HEK293 (cell line): ENCODE measurements at regions of chr17 and their contacts with region 1.

Region 1: DNA sequence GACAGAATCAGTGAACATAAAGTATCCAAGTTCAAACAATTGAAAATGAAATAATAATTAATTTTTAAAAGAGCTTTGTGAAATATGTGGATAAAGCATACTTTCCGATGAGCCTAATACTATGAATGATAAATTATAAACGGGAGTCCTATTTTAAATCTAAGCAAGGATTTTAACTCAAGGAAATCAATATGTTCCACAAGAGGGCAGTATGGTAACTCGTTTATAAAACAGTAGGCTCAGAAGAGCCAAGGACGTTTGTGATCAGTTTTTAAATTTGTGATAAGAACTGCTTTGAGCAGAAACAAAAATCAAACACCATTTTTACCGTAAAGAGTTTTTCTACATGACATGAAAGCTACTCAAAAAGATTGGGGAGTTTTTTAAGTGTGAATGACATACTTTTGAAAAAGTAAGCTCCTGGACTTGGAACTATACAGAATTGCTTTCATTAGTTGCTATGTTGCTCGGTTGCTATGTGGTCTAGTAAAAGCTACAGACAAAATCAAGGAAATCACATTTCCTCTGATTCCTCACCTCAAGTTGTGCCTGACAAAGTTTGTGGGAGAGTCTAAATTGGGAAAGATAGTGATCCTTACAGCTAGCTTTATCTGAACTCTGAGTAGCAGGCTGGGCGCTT is 11.8 kb upstream of the TEKT1 start:
- H3K4me3 ChIP-seq: no peak overlapping the region
- H3K27ac ChIP-seq: no peak overlapping the region
- H3K4me1 ChIP-seq: no peaks in the 10 kb centered on the region
- CTCF ChIP-seq: no peak

Region 2: GRCh38 chr17:6749519-6749918 is 93.8 kb before region 1 on chr17:
- CTCF ChIA-PET with region 1: interaction called, 13 read pairs
- POLR2A ChIA-PET with region 1: no interaction called
- H3K4me3 ChIP-seq: no peak overlapping the region
- H3K27ac ChIP-seq: no peak overlapping the region
- H3K4me1 ChIP-seq: no peaks in the 10 kb centered on the region; the same call in 1 of the 2 replicates
- CTCF ChIP-seq: no peak; the same call in 1 of the 2 replicates

Region 3: DNA sequence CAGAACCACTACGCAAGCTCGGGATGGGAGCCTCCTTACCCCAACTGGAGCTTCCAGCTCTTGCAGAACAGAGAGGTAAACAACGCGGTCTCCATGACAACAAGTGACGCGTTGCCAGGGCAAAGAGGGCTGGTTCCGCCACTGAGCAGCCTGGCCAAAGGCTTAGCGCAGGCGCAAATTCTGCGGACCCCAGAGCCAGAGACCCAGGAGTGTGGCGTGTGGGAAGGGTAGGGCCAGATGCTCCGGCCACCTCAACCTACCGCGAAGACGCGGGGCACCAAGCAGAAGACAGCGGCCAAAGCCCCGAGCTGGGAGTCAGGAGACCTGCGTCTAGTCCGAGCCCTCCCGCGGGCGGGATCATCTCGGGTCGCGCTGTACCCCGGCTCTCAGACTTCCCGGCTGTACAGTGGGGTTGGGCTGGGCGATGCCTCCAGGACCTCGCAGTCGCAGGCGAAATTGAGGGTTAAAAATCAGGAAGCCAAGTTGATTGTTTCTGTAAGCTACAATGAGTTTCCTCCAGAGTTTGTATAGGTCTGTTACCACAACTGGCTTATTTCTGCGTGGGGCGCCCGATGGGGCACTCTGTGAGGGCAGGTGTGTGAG is 11.6 kb before region 1 on chr17 and contains the start of gene TEKT1:
- CTCF ChIA-PET with region 1: interaction called, 49 read pairs
- POLR2A ChIA-PET with region 1: no interaction called
- H3K4me3 ChIP-seq: peak within 1 kb of the TSS; percentile 65
- H3K27ac ChIP-seq: no peak within 1 kb of the TSS
- H3K4me1 ChIP-seq: no peaks in the 10 kb centered on the region
- CTCF ChIP-seq: no peak

Region 4: DNA sequence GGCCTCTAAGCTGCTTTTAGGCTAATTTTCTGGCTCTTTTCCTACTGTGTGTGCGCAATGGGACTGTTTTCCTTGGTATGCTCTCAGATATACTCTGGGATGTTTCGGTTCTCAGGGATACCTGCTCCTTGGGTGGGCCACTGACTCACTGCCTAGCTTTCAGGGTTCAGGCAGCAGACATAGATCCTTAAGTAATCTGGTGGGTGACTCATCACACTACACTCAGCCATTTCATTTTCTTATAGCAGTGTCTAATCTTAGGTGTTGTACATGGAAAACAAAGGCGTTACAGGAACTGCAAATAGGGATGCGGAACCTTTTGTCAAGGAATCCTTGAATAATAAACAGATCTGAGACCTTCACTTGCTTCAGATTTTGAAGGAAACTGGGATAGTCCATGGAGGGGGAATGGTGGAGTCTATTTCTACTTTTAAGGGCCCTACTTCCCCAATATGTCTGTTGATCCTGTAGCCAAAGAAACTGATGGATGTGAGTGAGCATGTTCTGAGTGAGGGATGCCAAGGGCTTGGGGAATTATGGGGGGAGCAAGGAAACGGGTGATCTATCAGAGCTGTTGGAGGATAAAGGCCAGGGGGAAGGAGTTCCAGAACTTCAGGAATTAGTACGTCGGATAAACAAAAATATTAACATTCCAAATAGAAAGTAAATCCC is 28.9 kb after region 1 on chr17:
- CTCF ChIA-PET with region 1: interaction called, 18 read pairs
- POLR2A ChIA-PET with region 1: no interaction called
- H3K4me3 ChIP-seq: no peak overlapping the region
- H3K27ac ChIP-seq: no peak overlapping the region
- H3K4me1 ChIP-seq: no peaks in the 10 kb centered on the region
- CTCF ChIP-seq: no peak

Region 5: GRCh38 chr17:6913608-6914443 is 70.5 kb after region 1 on chr17:
- CTCF ChIA-PET with region 1: interaction called, 11 read pairs
- POLR2A ChIA-PET with region 1: no interaction called
- H3K4me3 ChIP-seq: no peak overlapping the region
- H3K27ac ChIP-seq: no peak overlapping the region
- H3K4me1 ChIP-seq: no peaks in the 10 kb centered on the region
- CTCF ChIP-seq: no peak

Region 6: DNA sequence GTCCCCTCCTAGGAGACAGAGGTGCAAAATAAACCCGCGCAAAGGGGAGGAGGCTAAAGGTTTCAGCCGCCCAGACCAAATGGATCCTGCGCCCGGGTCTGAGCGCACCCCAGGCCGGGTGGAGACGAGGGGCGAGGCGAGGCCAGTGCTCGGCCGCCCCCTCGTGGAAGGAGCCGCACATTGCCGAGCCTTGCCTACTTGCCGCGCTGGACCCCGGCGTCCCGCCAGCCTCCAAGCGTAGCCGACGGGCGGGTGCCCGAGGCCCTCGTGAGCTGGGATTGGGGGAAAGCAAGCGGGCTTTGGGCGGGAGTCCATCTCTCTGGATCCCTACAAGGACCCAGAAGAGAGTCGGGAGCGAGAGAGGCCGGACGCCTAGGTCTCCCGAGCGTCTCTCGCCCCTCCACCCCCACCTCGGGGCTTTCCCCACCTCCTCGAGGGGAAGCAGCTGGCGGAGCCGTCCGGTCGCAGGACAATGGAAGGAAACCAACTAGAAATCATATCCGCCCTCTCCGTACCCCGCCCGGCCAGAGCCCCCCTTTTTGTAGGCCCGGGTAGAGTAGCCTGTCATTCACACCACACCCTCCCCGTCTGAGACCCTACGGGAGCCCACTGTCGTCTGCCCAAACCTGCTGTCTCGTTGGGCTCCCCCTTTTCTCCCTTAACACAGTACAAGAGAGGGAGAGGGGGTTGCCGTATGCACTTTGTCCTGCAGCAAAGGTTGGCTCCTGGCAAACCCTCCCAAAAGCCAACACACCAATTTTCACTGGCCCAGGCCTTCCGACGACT is 178.8 kb after region 1 on chr17:
- CTCF ChIA-PET with region 1: interaction called, 35 read pairs
- POLR2A ChIA-PET with region 1: no interaction called
- H3K4me3 ChIP-seq: no peak overlapping the region
- H3K27ac ChIP-seq: no peak overlapping the region
- H3K4me1 ChIP-seq: peaks cover 3% of the 10 kb centered on the region; the same call in 1 of the 2 replicates
- CTCF ChIP-seq: peak; percentile 90